CD8-positive, alpha-beta T cell (primary cell): ENCODE measurements at regions of chr11 and their contacts with region 1.

Region 1: DNA sequence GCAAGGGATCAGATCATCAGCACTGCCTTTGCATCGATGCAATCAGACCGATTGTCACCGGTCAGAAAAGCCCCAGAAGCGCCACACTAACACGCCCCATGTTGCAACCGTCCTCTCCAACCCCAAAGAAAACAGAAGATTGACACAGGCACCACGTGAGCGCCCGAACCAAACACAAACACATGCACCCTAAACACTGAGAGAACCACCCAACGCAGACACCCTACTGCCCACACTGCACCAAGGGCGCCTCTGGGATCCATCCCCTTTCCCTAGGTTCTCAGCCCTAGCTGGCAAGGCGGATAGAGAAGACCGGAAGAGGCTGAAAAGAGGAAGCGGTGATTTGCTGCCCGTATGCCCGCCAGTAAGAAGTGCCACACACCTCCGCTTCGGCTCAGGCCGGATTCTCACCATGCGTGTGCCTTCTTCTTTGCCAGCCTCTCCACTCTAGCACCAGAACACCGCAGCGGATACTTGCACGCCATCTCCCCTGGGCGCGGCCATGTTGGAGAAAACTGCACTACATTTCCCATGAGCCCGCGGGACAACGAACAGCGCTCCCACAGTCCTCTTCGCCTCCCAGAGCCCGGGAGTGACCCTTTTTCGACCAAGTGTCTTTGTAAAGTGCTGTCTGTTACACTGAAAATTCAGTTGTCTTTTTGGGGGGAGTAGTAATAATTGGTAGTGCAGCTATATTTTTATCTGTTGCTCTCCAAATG is at the start of gene ALKBH8:
- DNase-seq: peak; percentile 51 to 88 (median 80)
- ATAC-seq: peak; percentile 93
- H3K4me3 ChIP-seq: peak within 1 kb of the TSS; percentile 72 to 87
- H3K4me3 Mint-ChIP-seq: peak within 1 kb of the TSS; percentile 92
- H3K27ac ChIP-seq: peak within 1 kb of the TSS; percentile 69 to 77
- H3K27ac Mint-ChIP-seq: peak within 1 kb of the TSS; percentile 92
- H3K4me1 ChIP-seq: peaks cover 24% of the 10 kb centered on the region
- H3K4me1 Mint-ChIP-seq: peaks cover 58% of the 10 kb centered on the region
- H3K27me3 ChIP-seq: no peaks in the 10 kb centered on the region
- H3K27me3 Mint-ChIP-seq: no peaks in the 10 kb centered on the region
- CTCF ChIP-seq: no peak
- total RNA-seq, gene ALKBH8: 10.2 to 11.8 TPM

Region 2: DNA sequence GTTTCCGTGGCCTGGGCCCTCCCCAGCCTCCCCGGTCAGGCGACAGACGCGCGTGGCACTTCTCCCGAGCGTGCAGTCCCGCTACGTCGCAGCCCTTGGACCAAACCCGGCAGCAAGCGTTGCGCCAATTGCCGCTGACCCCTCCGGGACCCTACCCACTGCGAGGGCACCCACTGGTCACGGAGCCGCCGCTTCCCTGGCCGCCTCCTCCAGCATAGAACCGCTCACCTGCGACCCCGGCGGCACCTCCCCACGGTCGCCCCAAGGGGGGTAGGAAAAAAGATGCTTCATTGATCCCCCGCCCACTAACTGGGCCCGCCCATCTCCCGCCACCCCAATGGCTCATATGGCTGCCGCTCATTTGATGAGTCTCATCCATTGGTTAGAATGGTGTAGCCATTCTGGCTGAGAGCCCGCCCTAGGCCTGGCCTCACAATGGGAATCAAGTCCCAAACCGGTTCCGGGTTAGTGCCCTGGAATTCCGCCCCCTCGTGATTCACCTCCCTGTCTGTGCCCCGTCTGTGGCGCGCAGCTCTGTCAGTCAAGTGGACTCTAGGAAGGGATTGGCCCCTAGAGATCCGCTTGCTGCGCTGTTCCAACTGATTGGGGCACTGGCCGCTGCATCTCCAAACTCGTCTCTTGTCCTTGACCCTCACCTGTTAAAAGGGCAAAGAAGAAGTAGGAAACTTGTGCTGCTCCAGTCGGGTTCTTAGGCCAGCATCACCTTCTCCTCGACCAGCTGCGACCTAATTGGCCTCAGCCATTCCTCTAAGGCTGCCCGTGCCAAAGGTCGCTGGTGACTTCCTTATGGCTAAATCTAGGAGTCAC is 1543.2 kb before region 1 on chr11 and contains the start of gene MSANTD4:
- CTCF ChIA-PET with region 1: no interaction called
- POLR2A ChIA-PET with region 1: no interaction called
- intact Hi-C with region 1: loop called in 1 of 2 experiments (anchors 5 kb)
- DNase-seq: peak; percentile 89 to 99 (median 95)
- ATAC-seq: peak; percentile 96
- H3K4me3 ChIP-seq: peak within 1 kb of the TSS; percentile 74 to 95
- H3K4me3 Mint-ChIP-seq: peak within 1 kb of the TSS; percentile 99
- H3K27ac ChIP-seq: peak within 1 kb of the TSS; percentile 47 to 79
- H3K27ac Mint-ChIP-seq: peak within 1 kb of the TSS; percentile 93
- H3K4me1 ChIP-seq: peaks cover 24% of the 10 kb centered on the region
- H3K4me1 Mint-ChIP-seq: peaks cover 48% of the 10 kb centered on the region
- H3K27me3 ChIP-seq: no peaks in the 10 kb centered on the region
- H3K27me3 Mint-ChIP-seq: no peaks in the 10 kb centered on the region
- CTCF ChIP-seq: no peak
- total RNA-seq, gene MSANTD4: 4.9 to 5.5 TPM

Region 3: DNA sequence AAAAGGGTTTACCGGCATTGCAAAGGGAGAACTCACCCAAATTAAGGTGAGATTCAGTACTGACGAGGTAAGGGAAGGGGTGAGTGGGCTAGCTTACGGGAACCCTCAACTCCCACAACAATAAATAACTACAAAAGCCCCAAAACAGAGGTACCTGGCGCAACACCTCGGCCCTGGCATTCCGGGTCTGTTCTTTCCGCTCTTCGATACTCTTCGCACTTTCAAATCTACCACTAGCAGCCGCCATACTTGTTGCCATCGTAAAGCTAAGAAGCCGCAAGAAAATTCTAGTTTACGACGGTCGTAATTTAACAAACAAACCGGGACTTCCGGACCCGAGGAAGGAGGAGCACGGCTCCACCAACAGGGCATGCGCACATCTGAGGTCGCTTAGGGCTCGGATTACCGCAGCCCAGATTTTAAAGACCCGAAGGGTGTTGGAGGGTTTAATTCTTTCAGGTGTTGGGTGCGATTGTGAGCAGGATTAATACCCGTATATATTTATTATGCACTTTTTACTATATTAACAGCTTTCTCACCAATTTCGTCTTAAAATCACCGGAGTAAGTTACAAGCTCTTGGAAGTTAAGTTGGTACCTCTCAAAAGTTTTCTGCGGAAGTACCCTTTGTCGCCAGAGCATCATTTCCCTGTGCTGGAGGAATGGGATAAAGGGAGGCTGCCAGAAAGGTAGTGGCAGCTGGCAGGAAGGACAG is 107.7 kb before region 1 on chr11 and contains the start of gene CWF19L2:
- CTCF ChIA-PET with region 1: no interaction called
- POLR2A ChIA-PET with region 1: interaction called, 3 read pairs
- intact Hi-C with region 1: loop called (anchors 1 to 2 kb)
- DNase-seq: peak; percentile 80 to 96 (median 88)
- ATAC-seq: peak; percentile 96
- H3K4me3 ChIP-seq: peak within 1 kb of the TSS; percentile 70 to 82
- H3K4me3 Mint-ChIP-seq: peak within 1 kb of the TSS; percentile 92
- H3K27ac ChIP-seq: peak within 1 kb of the TSS; percentile 73 to 81
- H3K27ac Mint-ChIP-seq: peak within 1 kb of the TSS; percentile 94
- H3K4me1 ChIP-seq: peaks cover 7% of the 10 kb centered on the region
- H3K4me1 Mint-ChIP-seq: peaks cover 32% of the 10 kb centered on the region
- H3K27me3 ChIP-seq: no peaks in the 10 kb centered on the region
- H3K27me3 Mint-ChIP-seq: peaks cover 2% of the 10 kb centered on the region
- CTCF ChIP-seq: no peak
- total RNA-seq, gene CWF19L2: 24.3 to 25.2 TPM

Region 4: GRCh38 chr11:107665018-107665417 is 99.6 kb after region 1 on chr11:
- CTCF ChIA-PET with region 1: no interaction called
- POLR2A ChIA-PET with region 1: no interaction called
- intact Hi-C with region 1: no loop called
- DNase-seq: no peak
- ATAC-seq: no peak
- H3K4me3 ChIP-seq: no peak overlapping the region
- H3K4me3 Mint-ChIP-seq: no peak overlapping the region
- H3K27ac ChIP-seq: no peak overlapping the region
- H3K27ac Mint-ChIP-seq: no peak overlapping the region
- H3K4me1 ChIP-seq: no peaks in the 10 kb centered on the region
- H3K4me1 Mint-ChIP-seq: no peaks in the 10 kb centered on the region
- H3K27me3 ChIP-seq: no peaks in the 10 kb centered on the region
- H3K27me3 Mint-ChIP-seq: peaks cover 8% of the 10 kb centered on the region
- CTCF ChIP-seq: no peak

Region 5: GRCh38 chr11:107689317-107690202 is 124.2 kb after region 1 on chr11:
- CTCF ChIA-PET with region 1: interaction called, 29 read pairs
- POLR2A ChIA-PET with region 1: no interaction called
- intact Hi-C with region 1: loop called (anchors 1 to 2 kb)
- DNase-seq: peak in 8 of 9 experiments; percentile 30 to 63 (median 52)
- ATAC-seq: peak; percentile 58
- H3K4me3 ChIP-seq: no peak overlapping the region
- H3K4me3 Mint-ChIP-seq: no peak overlapping the region
- H3K27ac ChIP-seq: no peak overlapping the region
- H3K27ac Mint-ChIP-seq: no peak overlapping the region
- H3K4me1 ChIP-seq: no peaks in the 10 kb centered on the region
- H3K4me1 Mint-ChIP-seq: no peaks in the 10 kb centered on the region
- H3K27me3 ChIP-seq: peaks cover 0 to 4% of the 10 kb centered on the region in 2 experiments
- H3K27me3 Mint-ChIP-seq: peaks cover 9% of the 10 kb centered on the region
- CTCF ChIP-seq: peak; percentile 47

Region 6: DNA sequence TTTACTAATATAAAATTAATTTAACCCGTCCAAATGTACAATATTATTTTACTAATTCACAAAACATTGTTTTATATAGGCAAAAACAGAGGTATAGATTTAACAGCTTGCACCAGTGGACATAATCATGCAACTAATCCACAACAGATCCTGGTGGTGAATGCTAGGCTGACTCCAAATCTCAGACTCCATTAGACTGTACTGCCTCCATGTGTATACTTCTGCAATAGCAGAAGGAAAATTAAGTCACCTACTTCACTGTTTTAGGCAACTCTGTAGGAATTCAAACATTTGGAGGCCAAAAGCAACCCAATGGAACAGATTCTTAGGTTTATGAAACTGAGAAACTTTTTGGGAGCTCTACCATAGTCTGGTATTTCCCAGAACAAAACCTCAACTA is 332.9 kb after region 1 on chr11:
- CTCF ChIA-PET with region 1: no interaction called
- POLR2A ChIA-PET with region 1: no interaction called
- intact Hi-C with region 1: loop called in 1 of 2 experiments (anchors 5 kb)
- DNase-seq: peak in 2 of 9 experiments; percentile 36 to 43
- ATAC-seq: peak; percentile 63
- H3K4me3 ChIP-seq: no peak overlapping the region
- H3K4me3 Mint-ChIP-seq: no peak overlapping the region
- H3K27ac ChIP-seq: no peak overlapping the region
- H3K27ac Mint-ChIP-seq: no peak overlapping the region
- H3K4me1 ChIP-seq: no peaks in the 10 kb centered on the region
- H3K4me1 Mint-ChIP-seq: no peaks in the 10 kb centered on the region
- H3K27me3 ChIP-seq: peaks cover 0 to 5% of the 10 kb centered on the region in 2 experiments
- H3K27me3 Mint-ChIP-seq: no peaks in the 10 kb centered on the region
- CTCF ChIP-seq: peak; percentile 37

Region 7: GRCh38 chr11:108664730-108665525 is 1099.5 kb after region 1 on chr11 and contains the start of gene DDX10:
- CTCF ChIA-PET with region 1: no interaction called
- POLR2A ChIA-PET with region 1: no interaction called
- intact Hi-C with region 1: loop called (anchors 1 to 5 kb)
- DNase-seq: peak; percentile 97 to 99 (median 99)
- ATAC-seq: peak; percentile 99
- H3K4me3 ChIP-seq: peak within 1 kb of the TSS; percentile 82 to 85
- H3K4me3 Mint-ChIP-seq: peak within 1 kb of the TSS; percentile 100
- H3K27ac ChIP-seq: peak within 1 kb of the TSS; percentile 66 to 71
- H3K27ac Mint-ChIP-seq: peak within 1 kb of the TSS; percentile 98
- H3K4me1 ChIP-seq: peaks cover 30% of the 10 kb centered on the region
- H3K4me1 Mint-ChIP-seq: peaks cover 49% of the 10 kb centered on the region
- H3K27me3 ChIP-seq: no peaks in the 10 kb centered on the region
- H3K27me3 Mint-ChIP-seq: no peaks in the 10 kb centered on the region
- CTCF ChIP-seq: no peak
- total RNA-seq, gene DDX10: 15.4 to 16.5 TPM